Panc1 (cell line): ENCODE measurements at regions of chr10 and their contacts with region 1.

Region 1: GRCh38 chr10:72223743-72224101 is 7.6 kb upstream of the ASCC1 start:
- DNase-seq: no peak
- ATAC-seq: no peak
- H3K4me3 ChIP-seq: no peak overlapping the region
- H3K27ac ChIP-seq: peak overlapping the region; percentile 84
- H3K4me1 ChIP-seq: peaks cover 22% of the 10 kb centered on the region
- H3K27me3 ChIP-seq: no peaks in the 10 kb centered on the region
- CTCF ChIP-seq: no peak

Region 2: DNA sequence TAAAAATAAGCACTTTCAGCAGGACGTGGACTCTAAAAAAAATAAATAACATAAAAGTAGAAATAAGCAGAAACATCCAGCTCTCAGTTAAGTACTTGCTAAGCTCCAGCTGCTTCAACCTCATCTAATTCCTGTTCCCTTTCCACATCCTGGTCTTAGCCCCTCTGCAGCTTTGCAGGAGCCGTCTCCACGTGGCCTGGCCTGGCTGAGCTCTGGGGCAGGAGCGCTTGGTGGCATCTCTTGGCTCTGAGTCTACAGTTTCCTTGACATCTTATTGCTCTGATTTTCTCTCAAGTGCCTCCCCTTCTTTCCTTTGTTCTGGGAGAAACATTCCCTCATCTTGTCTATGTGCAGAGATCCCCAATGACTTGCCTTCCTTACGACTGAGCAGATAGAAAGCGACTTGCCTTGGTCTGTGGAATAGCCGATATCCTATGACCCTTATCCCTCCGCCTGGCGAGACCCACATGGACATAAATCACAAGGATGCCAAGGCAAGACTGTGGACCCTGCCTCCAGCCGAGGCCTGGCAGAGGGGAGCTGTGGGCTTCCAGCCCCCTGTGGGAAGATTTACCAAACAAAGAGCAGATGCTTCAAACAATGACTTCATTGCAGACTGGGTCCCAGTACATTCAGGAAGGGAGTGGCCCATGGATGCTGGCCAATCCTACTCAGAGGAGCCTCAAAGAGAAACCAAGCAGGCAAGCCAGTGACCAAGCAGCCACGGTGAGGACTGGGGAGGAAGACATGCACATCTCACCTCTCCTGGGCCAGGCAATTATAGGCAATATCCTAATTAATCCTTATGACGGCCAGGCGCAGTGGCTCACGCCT is 197.2 kb before region 1 on chr10:
- CTCF ChIA-PET with region 1: no interaction called
- POLR2A ChIA-PET with region 1: no interaction called
- in situ Hi-C with region 1: no loop called
- intact Hi-C with region 1: no loop called
- DNase-seq: no peak
- ATAC-seq: peak; percentile 24; the same call in 1 of the 2 replicates
- H3K4me3 ChIP-seq: no peak overlapping the region
- H3K27ac ChIP-seq: no peak overlapping the region
- H3K4me1 ChIP-seq: peaks cover 18% of the 10 kb centered on the region
- H3K27me3 ChIP-seq: no peaks in the 10 kb centered on the region
- CTCF ChIP-seq: no peak

Region 3: GRCh38 chr10:72076756-72077155 is 147.0 kb before region 1 on chr10:
- CTCF ChIA-PET with region 1: interaction called, 12 read pairs
- POLR2A ChIA-PET with region 1: no interaction called
- in situ Hi-C with region 1: no loop called
- intact Hi-C with region 1: no loop called
- DNase-seq: no peak
- ATAC-seq: no peak
- H3K4me3 ChIP-seq: no peak overlapping the region
- H3K27ac ChIP-seq: no peak overlapping the region
- H3K4me1 ChIP-seq: peaks cover 36% of the 10 kb centered on the region
- H3K27me3 ChIP-seq: no peaks in the 10 kb centered on the region
- CTCF ChIP-seq: no peak

Region 4: DNA sequence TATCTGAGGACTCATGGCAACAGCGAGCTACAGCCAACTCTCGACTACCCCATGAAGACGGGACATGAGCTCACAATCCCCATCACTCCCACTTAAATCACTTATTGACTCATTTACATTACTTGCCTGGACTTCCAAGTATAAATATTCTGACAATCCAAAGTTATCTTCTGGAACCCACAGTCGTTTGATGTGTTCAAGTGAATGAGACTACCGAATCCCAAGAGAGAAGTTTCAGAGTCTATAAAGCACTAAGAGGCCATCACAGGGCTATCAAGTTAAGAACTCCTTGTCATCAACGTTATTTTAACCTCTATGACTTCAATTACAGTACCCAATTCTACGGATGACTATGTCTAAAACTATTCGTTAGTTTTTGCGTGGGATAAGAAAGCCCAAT is 19.4 kb before region 1 on chr10:
- CTCF ChIA-PET with region 1: interaction called, 12 read pairs
- POLR2A ChIA-PET with region 1: no interaction called
- in situ Hi-C with region 1: no loop called
- intact Hi-C with region 1: no loop called
- DNase-seq: no peak
- ATAC-seq: no peak
- H3K4me3 ChIP-seq: no peak overlapping the region
- H3K27ac ChIP-seq: peak overlapping the region; percentile 52
- H3K4me1 ChIP-seq: no peaks in the 10 kb centered on the region
- H3K27me3 ChIP-seq: no peaks in the 10 kb centered on the region
- CTCF ChIP-seq: no peak

Region 5: DNA sequence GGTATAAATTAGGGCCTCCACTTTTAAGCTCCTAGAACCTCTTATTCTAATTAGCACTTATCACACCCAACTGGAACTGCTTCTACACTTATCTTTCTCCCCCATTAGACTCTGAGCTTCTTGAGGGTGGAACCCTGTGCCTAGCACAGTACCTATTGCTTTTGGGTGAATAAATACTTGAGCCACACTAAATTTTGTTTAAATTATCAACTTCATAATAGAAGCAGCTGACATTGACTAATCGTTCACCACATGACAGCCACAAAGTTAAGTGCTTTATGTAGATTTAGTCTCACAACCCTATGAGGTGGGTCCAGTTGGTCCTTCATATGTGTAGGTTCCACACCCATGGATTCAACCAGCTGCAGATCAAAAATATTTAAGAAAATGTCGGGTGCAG is 167.0 kb after region 1 on chr10:
- CTCF ChIA-PET with region 1: interaction called, 12 read pairs
- POLR2A ChIA-PET with region 1: no interaction called
- in situ Hi-C with region 1: no loop called
- intact Hi-C with region 1: no loop called
- DNase-seq: no peak
- ATAC-seq: no peak
- H3K4me3 ChIP-seq: no peak overlapping the region
- H3K27ac ChIP-seq: no peak overlapping the region
- H3K4me1 ChIP-seq: no peaks in the 10 kb centered on the region
- H3K27me3 ChIP-seq: no peaks in the 10 kb centered on the region
- CTCF ChIP-seq: no peak